GM10248 (cell line): ENCODE measurements at regions of chr2 and their contacts with region 1.

Region 1: GRCh38 chr2:190365499-190366204 is 22.3 kb downstream of the INPP1 start:
- DNase-seq: no peak
- CTCF ChIP-seq: no peak

Region 2: DNA sequence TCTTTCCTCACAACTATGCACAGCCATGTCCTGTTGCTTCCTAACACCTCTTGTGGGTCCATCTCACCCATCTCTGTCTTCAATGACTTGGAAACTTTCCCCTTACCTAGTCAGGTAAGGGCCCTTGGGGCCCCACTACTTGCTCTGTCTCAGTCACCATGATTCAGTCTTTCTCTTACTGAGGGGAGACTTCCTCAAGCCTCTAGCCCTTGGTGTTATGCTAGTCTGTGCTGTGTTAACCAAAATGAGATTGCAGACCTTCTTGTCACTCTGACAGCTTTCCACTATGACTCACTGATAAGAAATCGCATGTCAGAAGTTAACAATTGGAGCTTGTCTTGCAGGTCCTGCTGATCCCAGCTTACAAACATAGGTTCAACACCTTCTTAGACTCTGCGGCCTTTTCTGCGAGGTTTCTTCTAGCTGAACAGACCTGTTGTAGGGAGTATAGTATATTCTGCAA is 859.1 kb before region 1 on chr2:
- CTCF ChIA-PET with region 1: no interaction called
- POLR2A ChIA-PET with region 1: no interaction called
- DNase-seq: no peak
- CTCF ChIP-seq: no peak

Region 3: DNA sequence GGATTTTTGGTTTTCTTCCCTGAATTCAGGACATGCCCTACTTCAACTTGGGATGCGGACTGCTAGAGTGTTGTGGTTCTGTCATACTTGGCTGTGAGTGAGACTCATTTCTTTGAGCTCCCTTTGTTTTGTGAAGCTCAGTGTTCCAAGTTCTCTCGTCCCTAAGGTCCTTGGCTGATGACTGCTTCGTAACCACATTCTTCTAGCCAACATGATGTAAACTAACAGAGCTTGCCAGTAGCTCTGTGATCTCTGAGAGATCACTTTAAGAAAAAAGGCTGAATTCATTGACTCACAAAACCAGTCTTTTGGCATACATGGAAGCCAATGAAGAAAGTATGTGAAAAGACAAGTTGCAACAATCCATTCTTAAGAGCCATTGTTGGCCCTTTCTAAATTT is 206.2 kb before region 1 on chr2:
- CTCF ChIA-PET with region 1: no interaction called
- POLR2A ChIA-PET with region 1: no interaction called
- DNase-seq: no peak
- CTCF ChIP-seq: no peak

Region 4: DNA sequence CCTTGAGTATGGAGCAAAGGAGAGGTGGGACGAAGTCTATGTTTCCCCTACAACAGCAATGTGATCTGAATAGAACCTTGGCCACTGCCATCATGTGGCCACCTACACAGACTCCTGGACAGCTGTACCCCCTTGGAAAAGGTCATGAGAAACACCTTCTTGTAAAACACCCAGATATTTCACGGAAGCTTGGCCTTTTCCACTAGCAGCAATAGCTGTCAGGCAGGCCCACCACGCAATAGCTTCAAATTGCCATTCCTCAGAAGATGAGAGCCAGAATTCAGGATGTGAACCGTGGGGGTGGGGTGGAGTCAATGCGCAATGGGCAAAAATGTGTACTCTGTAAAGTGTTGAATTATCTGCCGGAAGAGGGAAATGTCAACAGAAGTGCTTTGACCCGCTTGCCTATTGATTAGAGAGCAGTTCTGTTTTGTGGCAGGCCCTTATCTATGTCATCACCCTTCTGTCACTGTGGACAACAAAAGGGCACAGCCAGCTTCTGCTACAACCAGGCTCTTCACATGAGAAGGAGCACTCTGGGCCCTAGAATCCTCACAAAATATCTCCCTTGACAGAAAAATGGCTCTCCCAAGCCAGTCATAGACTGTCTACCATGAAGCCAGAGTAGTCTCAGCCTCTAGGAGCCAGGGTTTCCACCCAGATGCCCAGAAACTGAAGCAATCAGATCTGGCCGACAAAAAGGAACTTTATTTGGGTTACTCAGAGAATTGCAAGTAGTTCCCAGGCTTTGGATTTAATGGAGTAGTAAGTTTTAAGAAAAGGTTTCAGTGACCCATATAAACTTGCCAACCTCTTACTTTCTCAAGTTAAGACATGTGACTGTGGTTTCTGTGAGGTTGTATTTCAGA is 12.8 kb before region 1 on chr2:
- CTCF ChIA-PET with region 1: interaction called, 25 read pairs
- POLR2A ChIA-PET with region 1: no interaction called
- DNase-seq: no peak
- CTCF ChIP-seq: no peak